GM10248 (cell line): ENCODE measurements at regions of chr1 and their contacts with region 1.

Region 1: DNA sequence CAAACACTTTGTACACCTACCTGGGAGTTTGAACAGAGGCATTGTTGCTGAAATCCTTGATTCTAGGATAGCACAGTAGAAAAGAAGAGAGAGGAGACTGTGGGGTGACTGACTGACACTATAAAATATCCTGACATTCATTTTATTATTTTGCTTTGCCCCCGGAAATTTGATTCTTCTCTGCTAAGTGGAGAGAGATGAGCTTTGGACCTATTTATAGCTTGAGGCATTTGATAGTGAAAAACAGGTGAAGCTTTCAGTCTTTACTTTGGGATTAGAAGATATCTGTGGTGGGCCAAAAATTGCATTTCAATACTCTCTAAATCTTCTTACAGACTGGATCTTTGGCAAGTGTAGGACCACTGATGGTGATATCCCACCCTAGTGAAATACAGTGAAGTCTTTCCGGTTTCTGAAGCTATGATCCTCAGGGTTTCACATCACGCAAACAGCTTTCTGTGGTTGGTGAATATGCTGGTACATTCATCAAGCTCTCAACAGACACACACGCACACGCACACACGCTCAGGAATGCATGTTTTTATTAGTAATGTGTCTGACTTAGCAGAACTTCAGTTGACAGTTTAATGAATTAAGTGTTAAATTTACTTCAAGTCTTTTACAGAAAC is at the start of gene AMPD1:
- DNase-seq: no peak
- CTCF ChIP-seq: no peak

Region 2: GRCh38 chr1:114660224-114660623 is 35.3 kb before region 1 on chr1:
- CTCF ChIA-PET with region 1: no interaction called
- POLR2A ChIA-PET with region 1: no interaction called
- DNase-seq: no peak
- CTCF ChIP-seq: no peak

Region 3: GRCh38 chr1:114716304-114717170 is 21.0 kb after region 1 on chr1 and contains the start of gene NRAS:
- CTCF ChIA-PET with region 1: interaction called, 11 read pairs
- POLR2A ChIA-PET with region 1: interaction called, 3 read pairs
- DNase-seq: peak; percentile 94
- CTCF ChIP-seq: no peak